HCT116 (cell line): ENCODE measurements at regions of chr4 and their contacts with region 1.

Region 1: DNA sequence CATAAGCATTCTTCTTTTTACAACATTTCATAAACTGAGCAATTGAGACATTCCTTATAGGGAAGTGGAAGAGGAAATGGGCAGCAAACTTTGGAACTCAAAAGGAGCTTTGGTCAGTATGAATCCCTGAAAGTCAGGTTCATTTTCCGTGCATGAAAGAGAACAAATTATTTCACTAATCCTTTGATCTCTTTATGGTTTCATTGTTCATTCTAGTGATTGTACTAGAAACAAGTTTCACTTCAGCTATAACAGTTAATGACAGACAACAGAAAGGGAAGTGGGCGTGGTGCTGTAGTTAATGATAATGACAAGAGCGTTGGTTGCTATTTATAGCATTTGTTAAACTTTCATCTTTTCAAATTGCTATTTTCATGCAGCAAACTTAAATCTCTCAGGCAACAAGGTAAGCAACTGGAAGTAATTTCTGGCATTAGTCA is 98.3 kb downstream of the AREG start:
- DNase-seq: no peak
- ATAC-seq: peak; percentile 21
- H3K4me3 ChIP-seq: peak overlapping the region in 1 of 2 experiments; percentile 16; a peak in 2 of 4 replicates
- H3K27ac ChIP-seq: peak overlapping the region; percentile 92
- H3K4me1 ChIP-seq: peaks cover 85 to 96% of the 10 kb centered on the region in 2 experiments
- H3K27me3 ChIP-seq: no peaks in the 10 kb centered on the region
- CTCF ChIP-seq: no peak
- POLR2A ChIP-seq: no peak
- RAD21 ChIP-seq: no peak

Region 2: DNA sequence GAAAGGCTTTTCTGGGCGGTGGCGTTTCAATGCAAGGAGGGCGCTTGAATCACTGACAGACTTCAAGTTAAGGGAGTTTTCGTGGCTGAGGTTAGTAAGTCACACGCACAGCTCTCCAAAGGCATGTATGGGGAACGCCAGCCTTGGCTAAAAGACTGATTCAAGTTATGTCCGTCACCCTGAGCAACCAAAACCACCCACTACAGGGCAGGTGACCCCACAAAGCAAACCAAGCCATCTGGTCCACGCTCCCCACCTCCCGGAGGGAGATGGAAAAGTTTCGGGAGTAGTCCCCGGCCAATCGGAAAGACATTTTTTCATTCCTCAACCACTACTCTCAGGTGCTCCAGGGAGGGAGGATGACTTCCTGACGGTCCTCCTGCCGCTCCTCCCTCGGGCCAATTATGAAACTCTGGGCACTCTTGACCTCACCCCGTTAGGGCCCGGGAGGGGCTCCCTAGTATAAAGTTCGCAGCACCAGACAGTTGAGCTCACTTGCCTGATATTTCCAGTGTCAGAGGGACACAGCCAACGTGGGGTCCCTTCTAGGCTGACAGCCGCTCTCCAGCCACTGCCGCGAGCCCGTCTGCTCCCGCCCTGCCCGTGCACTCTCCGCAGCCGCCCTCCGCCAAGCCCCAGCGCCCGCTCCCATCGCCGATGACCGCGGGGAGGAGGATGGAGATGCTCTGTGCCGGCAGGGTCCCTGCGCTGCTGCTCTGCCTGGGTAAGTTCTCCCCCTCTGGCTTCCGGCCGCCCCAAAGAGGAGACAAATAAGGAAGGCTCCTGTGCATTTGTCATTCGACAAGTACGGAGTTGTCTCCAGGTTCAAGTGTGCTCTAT is 178.4 kb before region 1 on chr4 and contains the start of gene EREG:
- CTCF ChIA-PET with region 1: interaction called, 4 read pairs
- POLR2A ChIA-PET with region 1: interaction called, 28 read pairs
- RAD21 ChIA-PET with region 1: no interaction called
- intact Hi-C with region 1: no loop called
- DNase-seq: peak; percentile 74
- ATAC-seq: peak; percentile 71
- H3K4me3 ChIP-seq: peak within 1 kb of the TSS; percentile 76 to 91
- H3K27ac ChIP-seq: peak within 1 kb of the TSS; percentile 94
- H3K4me1 ChIP-seq: peaks cover 50 to 89% of the 10 kb centered on the region in 2 experiments
- H3K27me3 ChIP-seq: no peaks in the 10 kb centered on the region
- CTCF ChIP-seq: no peak
- POLR2A ChIP-seq: peak; percentile 76
- RAD21 ChIP-seq: no peak
- total RNA-seq, gene EREG: 498 TPM

Region 3: GRCh38 chr4:74531963-74532794 is 11.1 kb before region 1 on chr4:
- CTCF ChIA-PET with region 1: interaction called, 5 read pairs
- POLR2A ChIA-PET with region 1: interaction called, 66 read pairs
- RAD21 ChIA-PET with region 1: no interaction called
- intact Hi-C with region 1: no loop called
- DNase-seq: peak; percentile 92
- ATAC-seq: peak; percentile 86
- H3K4me3 ChIP-seq: no peak overlapping the region
- H3K27ac ChIP-seq: peak overlapping the region; percentile 37; the same call in 1 of the 2 replicates
- H3K4me1 ChIP-seq: peaks cover 54 to 79% of the 10 kb centered on the region in 2 experiments
- H3K27me3 ChIP-seq: no peaks in the 10 kb centered on the region
- CTCF ChIP-seq: peak; percentile 59 to 98 (median 69)
- POLR2A ChIP-seq: no peak
- RAD21 ChIP-seq: peak; percentile 95

Region 4: GRCh38 chr4:74632634-74633033 is 89.4 kb after region 1 on chr4:
- CTCF ChIA-PET with region 1: no interaction called
- POLR2A ChIA-PET with region 1: interaction called, 145 read pairs
- RAD21 ChIA-PET with region 1: no interaction called
- intact Hi-C with region 1: no loop called
- DNase-seq: peak; percentile 95
- ATAC-seq: peak; percentile 64
- H3K4me3 ChIP-seq: peak overlapping the region in 1 of 2 experiments; percentile 9; a peak in 1 of 4 replicates
- H3K27ac ChIP-seq: peak overlapping the region; percentile 94
- H3K4me1 ChIP-seq: peaks cover 86 to 100% of the 10 kb centered on the region in 2 experiments
- H3K27me3 ChIP-seq: no peaks in the 10 kb centered on the region
- CTCF ChIP-seq: no peak
- POLR2A ChIP-seq: no peak
- RAD21 ChIP-seq: no peak

Region 5: DNA sequence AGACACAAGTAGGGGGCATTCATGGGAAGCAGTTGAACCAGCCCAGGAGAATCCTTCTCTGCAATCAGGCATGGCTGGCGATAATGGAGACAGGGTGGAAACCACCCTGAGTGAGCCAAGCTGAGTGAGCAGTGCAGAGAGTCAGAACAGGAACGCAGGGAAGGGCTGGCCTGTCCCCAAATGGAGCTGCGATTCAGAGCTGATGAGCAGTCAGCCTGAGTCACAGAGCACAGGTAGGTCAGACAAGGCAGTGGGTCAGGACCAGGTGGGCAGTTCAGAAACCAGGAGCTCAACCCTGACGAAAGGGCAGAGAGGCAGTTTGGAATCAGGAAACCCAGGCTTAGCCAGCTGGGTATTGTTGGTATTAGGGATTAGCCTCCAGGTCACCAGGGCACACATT is 122.1 kb after region 1 on chr4:
- CTCF ChIA-PET with region 1: interaction called, 4 read pairs
- POLR2A ChIA-PET with region 1: interaction called, 61 read pairs
- RAD21 ChIA-PET with region 1: interaction called in 1 of 2 experiments, 4 read pairs
- intact Hi-C with region 1: no loop called
- DNase-seq: peak; percentile 80
- ATAC-seq: peak; percentile 81
- H3K4me3 ChIP-seq: peak overlapping the region in 1 of 2 experiments; percentile 22; a peak in 2 of 4 replicates
- H3K27ac ChIP-seq: peak overlapping the region; percentile 93
- H3K4me1 ChIP-seq: peaks cover 86 to 99% of the 10 kb centered on the region in 2 experiments
- H3K27me3 ChIP-seq: no peaks in the 10 kb centered on the region
- CTCF ChIP-seq: no peak
- POLR2A ChIP-seq: no peak
- RAD21 ChIP-seq: no peak